Heart left ventricle (tissue), 16 donors: ENCODE measurements at regions of chr3 and their contacts with region 1.

Region 1: DNA sequence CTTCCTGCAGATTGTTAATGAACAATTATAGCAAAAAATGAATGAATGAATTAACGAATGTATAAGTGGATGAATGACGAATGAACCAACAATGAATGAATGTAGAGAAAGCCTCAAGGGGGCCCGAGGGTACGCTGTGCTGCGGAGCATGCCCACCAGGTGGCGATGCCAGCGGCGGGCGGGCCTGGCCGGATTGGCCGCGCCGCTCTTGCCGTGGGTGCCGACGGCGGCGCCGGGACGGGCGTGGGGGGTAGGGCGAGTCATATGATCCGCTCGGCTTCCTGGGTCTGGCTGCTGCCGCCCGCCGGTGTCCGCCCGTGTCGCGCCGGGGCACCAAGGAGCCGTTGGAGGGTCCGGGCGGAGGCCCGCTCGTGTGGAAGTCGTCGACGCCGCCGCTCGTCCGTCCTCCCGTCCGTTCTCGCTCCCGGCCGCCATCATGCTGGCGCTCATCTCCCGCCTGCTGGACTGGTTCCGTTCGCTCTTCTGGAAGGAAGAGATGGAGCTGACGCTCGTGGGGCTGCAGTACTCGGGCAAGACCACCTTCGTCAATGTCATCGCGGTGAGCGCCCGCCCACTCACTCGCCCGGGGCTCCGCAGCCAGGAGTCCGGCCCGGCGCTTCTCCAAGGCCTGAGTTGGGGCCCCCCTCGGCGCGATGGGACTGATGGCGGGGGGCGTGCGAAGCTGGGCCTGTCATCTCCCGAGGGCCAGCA is at the start of gene ARL8B:
- DNase-seq: peak; percentile 91 to 97 (median 92)
- ATAC-seq: peak; percentile 97 to 99 (median 98)
- H3K4me3 ChIP-seq: peak within 1 kb of the TSS; percentile 80 to 100 (median 89)
- H3K27ac ChIP-seq: peak within 1 kb of the TSS; percentile 53 to 96 (median 90)
- H3K4me1 ChIP-seq: peaks cover 0 to 51% (median 39%) of the 10 kb centered on the region in 12 donors
- H3K27me3 ChIP-seq: no peaks in the 10 kb centered on the region
- CTCF ChIP-seq: peak; percentile 93 to 100 (median 98)
- POLR2A ChIP-seq: peak in 1 of 2 donors; percentile 57
- total RNA-seq, gene ARL8B: 43.5 to 77.1 (median 64.0) TPM

Region 2: DNA sequence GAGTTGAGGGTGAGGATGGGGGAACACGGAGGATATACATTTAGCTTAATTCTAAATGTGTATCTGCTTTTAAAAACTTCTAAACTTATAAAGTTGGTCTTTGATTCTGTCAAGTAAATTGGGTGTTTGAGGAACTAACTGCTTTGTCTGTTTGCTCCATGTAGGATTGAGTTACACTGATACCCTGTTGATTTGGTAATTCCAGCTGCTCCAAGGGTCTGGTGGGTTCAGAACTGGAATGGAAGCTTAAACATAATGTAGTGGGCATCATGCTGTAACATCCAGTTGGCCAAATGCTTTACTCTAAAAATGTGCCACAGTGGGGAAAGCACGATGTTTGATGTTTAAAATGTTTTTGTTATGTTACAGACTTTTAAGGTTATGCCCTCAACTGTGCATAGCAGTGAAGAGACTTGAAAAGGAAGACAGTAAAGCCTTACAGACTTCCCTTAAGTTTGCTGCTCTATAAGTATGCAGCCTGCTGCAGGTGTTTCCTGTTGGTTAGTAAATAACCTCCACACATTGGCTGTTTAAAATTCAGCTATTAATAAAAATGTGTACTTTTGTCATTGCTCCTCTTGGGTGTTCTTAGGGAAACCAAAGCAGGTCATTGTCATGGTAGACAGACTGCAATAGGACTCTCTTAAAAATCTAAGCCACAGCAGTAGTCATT is 59.4 kb after region 1 on chr3:
- intact Hi-C with region 1: loop called in 9 of 10 experiments (anchors 2 to 5 kb)
- DNase-seq: no peak
- ATAC-seq: no peak
- H3K4me3 ChIP-seq: no peak overlapping the region
- H3K27ac ChIP-seq: no peak overlapping the region
- H3K4me1 ChIP-seq: peaks cover 0 to 42% (median 11%) of the 10 kb centered on the region in 12 donors
- H3K27me3 ChIP-seq: no peaks in the 10 kb centered on the region
- CTCF ChIP-seq: no peak
- POLR2A ChIP-seq: no peak